ENCODE measurements at regions of chr15 and their contacts with region 1.

Region 1: GRCh38 chr15:90539789-90540188 is 10.1 kb downstream of the CRTC3 start:
- DNase-seq: no peak
- H3K4me3 ChIP-seq: no peak overlapping the region
- H3K27ac ChIP-seq: no peak overlapping the region
- H3K4me1 ChIP-seq: peaks cover 9 to 25% of the 10 kb centered on the region in 2 donors
- H3K27me3 ChIP-seq: no peaks in the 10 kb centered on the region
- CTCF ChIP-seq: no peak
- POLR2A ChIP-seq: no peak

Region 2: GRCh38 chr15:90609242-90610180 is 69.7 kb after region 1 on chr15:
- intact Hi-C with region 1: loop called in 1 of 2 experiments (anchors 5 kb)
- DNase-seq: peak in 1 of 7 donors; percentile 36
- H3K4me3 ChIP-seq: no peak overlapping the region
- H3K27ac ChIP-seq: no peak overlapping the region
- H3K4me1 ChIP-seq: no peaks in the 10 kb centered on the region
- H3K27me3 ChIP-seq: no peaks in the 10 kb centered on the region
- CTCF ChIP-seq: no peak
- POLR2A ChIP-seq: no peak

Measured in adrenal gland (tissue), 19 donors.